Activated T-helper 2 cell treated with anti-CD3 and anti-CD28 coated beads, Interferon-gamma antibody, Interleukin-2, Interleukin-4, amounts not matched to agents 10 μg/mL and 5 μg/mL and 100 μg/mL, durations not matched to agents 14 hours and 24 hours and 36 hours (primary cell): ENCODE measurements at regions of chr5 and their contacts with region 1.

Region 1: GRCh38 chr5:10761166-10761932 is at the start of gene DAP:
- DNase-seq: peak; percentile 87
- H3K4me3 Mint-ChIP-seq: peak within 1 kb of the TSS; percentile 97
- H3K27ac Mint-ChIP-seq: peak within 1 kb of the TSS; percentile 84
- H3K4me1 Mint-ChIP-seq: peaks cover 24% of the 10 kb centered on the region
- H3K27me3 Mint-ChIP-seq: peaks cover 15% of the 10 kb centered on the region
- total RNA-seq, gene DAP: 51.3 and 56.6 TPM in 2 replicates

Region 2: DNA sequence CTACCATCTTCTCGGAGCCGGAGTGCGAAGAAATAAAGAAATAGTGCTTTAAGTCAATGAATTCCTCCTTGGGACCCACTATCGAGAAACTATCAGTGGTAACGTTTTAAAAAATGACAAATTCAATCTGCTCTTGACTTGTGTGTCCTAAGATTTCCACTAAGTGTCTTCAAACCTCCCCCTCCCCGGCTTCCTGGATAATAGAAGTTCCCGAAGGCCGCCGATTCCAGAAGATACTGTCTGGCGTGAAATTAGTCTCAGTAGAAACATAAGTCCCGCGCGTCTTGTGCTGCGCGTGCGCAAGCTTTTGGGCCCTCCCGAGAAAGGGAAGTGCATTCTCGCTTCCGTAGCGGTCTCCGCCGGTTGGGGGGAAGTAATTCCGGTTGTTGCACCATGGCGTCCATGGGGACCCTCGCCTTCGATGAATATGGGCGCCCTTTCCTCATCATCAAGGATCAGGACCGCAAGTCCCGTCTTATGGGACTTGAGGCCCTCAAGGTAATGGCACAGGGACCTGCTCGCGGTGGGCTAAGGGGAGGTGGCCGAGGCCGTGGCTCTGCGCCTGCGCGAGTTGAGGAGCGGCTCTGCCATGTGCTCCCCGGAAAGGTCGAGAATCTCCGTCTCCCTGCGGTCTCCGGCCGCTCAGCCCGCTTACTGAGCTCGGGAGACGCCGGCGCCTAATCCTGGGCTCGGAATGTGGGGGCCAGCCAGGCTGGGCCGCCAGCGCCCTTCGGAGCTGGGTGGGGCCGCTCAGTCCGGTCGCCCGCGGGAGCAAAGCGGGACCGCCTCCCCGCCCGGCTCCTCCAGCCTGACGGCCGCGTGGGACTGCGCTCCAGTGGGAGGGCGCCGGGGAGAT is 511.2 kb before region 1 on chr5 and contains the start of gene CCT5:
- intact Hi-C with region 1: loop called (anchors 1 kb)
- DNase-seq: peak; percentile 90
- H3K4me3 Mint-ChIP-seq: peak within 1 kb of the TSS; percentile 96
- H3K27ac Mint-ChIP-seq: peak within 1 kb of the TSS; percentile 98
- H3K4me1 Mint-ChIP-seq: peaks cover 41% of the 10 kb centered on the region
- H3K27me3 Mint-ChIP-seq: no peaks in the 10 kb centered on the region
- total RNA-seq, gene CCT5: 494 and 522 TPM in 2 replicates

Region 3: DNA sequence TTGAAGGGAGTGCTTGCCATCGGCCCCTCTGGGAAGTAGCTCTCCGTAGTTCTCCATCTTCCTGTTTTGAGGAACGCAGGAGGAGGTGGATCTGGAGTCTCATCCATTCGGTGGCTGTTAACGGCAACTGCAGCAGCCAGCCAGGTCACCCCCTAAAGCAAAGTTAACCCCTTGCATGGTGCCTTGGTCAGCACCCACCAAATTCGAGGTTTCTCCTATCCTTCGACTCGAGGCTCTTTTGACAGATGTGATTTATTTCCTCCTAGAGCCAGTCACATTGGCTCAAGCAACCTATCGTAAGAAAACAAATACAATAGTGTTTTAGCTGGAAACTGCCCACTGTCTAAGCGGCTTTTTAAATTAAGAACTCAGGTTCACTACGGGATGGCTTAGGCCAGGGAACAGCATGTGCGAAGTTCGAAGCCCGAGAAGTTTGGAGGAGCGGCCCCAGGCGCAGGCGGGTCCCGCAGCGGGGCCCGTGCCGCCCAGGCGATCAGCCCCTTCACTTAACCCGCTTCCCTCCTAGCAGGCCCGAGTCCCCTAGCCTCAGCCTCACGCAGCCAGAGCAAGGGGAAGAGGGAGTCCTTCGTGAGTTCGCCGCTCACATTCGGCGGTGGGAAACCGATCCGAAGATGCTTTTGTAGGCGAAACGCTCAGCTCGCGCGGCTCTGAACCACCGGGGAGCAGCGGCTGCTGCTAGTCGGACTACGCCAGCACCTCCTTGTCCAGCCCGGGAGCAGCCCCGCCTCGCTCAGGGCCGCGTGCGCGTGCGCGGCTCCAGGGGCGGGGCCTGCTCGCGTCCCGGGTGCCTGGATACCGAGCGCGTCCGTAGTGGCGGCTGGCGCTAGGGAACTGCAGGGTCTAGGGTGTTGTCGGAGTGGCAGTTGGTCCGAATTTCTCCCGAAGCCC is 320.0 kb before region 1 on chr5 and contains the start of gene ROPN1L:
- intact Hi-C with region 1: loop called (anchors 5 kb)
- DNase-seq: peak; percentile 79
- H3K4me3 Mint-ChIP-seq: peak within 1 kb of the TSS; percentile 82
- H3K27ac Mint-ChIP-seq: no peak within 1 kb of the TSS
- H3K4me1 Mint-ChIP-seq: peaks cover 34% of the 10 kb centered on the region
- H3K27me3 Mint-ChIP-seq: peaks cover 10% of the 10 kb centered on the region
- total RNA-seq, gene ROPN1L: 0.16 and 0.55 TPM in 2 replicates

Region 4: DNA sequence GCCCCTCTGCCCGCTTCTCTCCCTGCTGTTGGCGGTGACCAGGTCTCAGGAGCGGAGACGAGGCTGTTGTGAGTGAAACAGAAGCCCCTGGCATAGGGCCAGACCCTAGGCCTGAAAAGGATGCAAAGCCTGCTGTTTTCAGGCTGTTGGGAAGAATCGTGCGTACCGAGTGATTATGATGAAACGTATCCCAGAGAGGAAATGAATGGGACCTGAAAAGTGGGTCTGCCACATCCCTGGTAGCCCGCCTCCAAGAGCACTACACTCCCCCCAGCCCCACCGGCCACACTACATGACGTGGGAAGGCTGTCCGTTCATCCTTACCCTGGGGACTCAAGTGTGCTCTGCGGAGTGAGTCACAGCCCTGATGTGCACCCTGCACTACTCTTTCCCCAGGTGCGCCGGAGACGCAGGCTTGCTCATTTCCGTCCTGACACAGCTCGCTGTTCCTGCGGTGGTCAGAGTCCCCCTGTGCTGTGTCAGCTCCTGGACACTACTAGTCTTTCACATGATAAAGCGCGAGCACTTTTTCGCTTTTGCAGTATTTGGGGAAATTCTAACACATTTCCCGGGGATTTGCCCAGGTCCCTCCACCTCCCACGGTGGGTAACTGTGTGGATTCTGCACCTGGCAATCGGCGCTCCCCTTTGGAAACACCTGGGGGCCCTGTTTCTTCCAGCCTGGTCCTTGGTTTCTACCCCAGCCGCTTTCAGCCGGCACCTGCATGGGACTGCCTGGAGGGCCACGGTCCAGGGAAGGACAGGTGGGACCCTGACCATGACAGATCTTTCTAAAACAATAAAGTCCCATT is 106.0 kb before region 1 on chr5:
- intact Hi-C with region 1: no loop called
- DNase-seq: no peak
- H3K4me3 Mint-ChIP-seq: no peak overlapping the region
- H3K27ac Mint-ChIP-seq: no peak overlapping the region
- H3K4me1 Mint-ChIP-seq: no peaks in the 10 kb centered on the region
- H3K27me3 Mint-ChIP-seq: no peaks in the 10 kb centered on the region